Activated T-helper 1 cell treated with anti-CD3 and anti-CD28 coated beads, Interleukin-12 subunit alpha, Interleukin-12 subunit beta, Interleukin-2, Interleukin-4 antibody, amounts not matched to agents 30 ng/mL and 10 ng/mL and 1 ng/mL, durations not matched to agents 14 hours and 24 hours and 36 hours (primary cell): ENCODE measurements at regions of chr1 and their contacts with region 1.

Region 1: GRCh38 chr1:212284744-212285684 is at the start of gene PPP2R5A:
- DNase-seq: peak; percentile 99
- H3K4me3 Mint-ChIP-seq: peak within 1 kb of the TSS; percentile 97
- H3K27ac Mint-ChIP-seq: peak within 1 kb of the TSS; percentile 99
- H3K4me1 Mint-ChIP-seq: peaks cover 50% of the 10 kb centered on the region
- H3K27me3 Mint-ChIP-seq: peaks cover 3% of the 10 kb centered on the region
- total RNA-seq, gene PPP2R5A: 46.4 and 53.7 TPM in 2 replicates

Region 2: DNA sequence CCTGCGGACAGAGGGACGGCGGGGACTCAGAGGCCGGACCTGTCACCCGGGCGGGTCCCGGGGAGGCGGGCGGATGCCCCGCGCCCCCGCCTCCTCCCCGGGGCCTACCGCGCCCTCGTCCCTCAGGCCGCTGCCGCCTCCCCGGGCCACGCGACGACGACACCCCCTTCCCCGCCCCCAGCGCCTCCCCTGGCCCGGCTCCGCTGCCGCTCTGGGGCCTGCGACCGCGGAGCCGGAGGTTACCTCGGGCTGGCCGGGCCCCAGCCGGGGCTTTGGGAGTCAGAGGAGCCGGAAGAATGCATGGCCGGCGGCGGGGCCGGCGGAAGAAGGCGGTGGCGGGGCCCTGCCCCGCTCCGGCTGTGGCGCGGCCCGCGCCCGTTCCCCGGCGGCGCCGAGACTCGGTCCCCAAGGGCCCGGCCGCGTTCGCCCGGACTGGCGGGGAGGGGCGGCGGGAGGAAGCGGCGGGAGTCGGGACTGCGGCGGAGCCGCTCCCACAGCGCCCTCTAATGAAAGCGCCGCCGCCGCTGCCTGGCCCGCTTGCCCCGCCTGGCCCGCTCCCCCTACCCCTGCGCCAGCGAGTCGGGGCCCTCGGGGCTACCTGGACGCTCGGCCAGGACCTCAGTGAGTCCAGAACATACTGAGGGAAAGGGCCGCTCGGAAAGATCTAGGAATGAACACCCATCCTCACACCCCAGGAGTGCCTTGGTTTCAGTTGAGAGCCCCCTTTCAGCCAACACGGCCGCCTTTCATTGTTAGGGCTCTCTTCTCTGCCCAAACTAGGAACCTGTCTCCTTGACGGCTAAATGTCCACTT is 454.5 kb before region 1 on chr1 and contains the start of gene LPGAT1:
- intact Hi-C with region 1: loop called (anchors 5 kb)
- DNase-seq: peak; percentile 65
- H3K4me3 Mint-ChIP-seq: peak within 1 kb of the TSS; percentile 91
- H3K27ac Mint-ChIP-seq: peak within 1 kb of the TSS; percentile 90
- H3K4me1 Mint-ChIP-seq: peaks cover 69% of the 10 kb centered on the region
- H3K27me3 Mint-ChIP-seq: peaks cover 2% of the 10 kb centered on the region
- total RNA-seq, gene LPGAT1: 35.3 and 35.6 TPM in 2 replicates

Region 3: DNA sequence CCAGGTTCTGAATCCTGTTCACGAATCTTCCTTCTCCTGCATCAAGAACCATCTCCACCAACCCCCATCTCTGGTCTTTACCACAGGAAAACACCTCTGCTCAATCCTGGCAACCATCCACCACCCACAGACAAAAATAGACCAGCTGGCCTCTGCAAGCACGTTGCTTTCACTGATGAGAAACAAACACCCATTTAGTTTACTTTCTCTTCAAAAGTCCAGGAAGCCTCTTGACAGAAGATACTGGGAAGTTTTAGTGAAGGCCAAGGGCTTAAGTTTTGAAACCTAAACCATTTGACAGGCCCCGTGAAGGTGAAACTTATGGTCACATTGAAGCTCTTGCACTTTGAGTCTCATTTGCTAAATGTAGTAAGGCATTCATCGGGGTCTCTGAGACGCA is 122.4 kb before region 1 on chr1:
- intact Hi-C with region 1: loop called (anchors 2 kb)
- DNase-seq: peak; percentile 20
- H3K4me3 Mint-ChIP-seq: peak overlapping the region; percentile 41
- H3K27ac Mint-ChIP-seq: peak overlapping the region; percentile 78
- H3K4me1 Mint-ChIP-seq: peaks cover 35% of the 10 kb centered on the region
- H3K27me3 Mint-ChIP-seq: no peaks in the 10 kb centered on the region

Region 4: GRCh38 chr1:212242288-212242984 is 42.6 kb before region 1 on chr1:
- intact Hi-C with region 1: no loop called
- DNase-seq: no peak
- H3K4me3 Mint-ChIP-seq: no peak overlapping the region
- H3K27ac Mint-ChIP-seq: peak overlapping the region; percentile 71
- H3K4me1 Mint-ChIP-seq: peaks cover 33% of the 10 kb centered on the region
- H3K27me3 Mint-ChIP-seq: no peaks in the 10 kb centered on the region

Region 5: DNA sequence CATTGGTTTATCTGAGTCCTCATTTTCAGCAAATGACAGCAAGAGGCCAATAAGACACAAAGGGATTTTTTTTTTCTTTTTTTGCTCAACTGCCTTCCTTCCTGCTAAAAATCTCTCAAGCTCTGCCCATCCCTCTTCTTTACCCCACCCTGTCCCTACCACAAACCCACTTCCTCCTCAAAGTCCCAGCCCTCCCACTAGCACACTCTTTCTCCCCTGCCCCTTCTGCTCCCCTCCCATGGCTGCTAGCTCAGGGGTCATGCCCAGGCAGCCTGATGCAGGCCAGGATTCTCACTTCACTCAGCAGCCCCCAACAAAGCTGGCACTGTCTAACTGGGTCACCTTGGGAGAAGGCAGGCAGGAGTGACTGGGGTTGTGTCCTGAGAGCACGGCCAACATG is 28.6 kb before region 1 on chr1:
- intact Hi-C with region 1: loop called (anchors 1 kb)
- DNase-seq: peak; percentile 53
- H3K4me3 Mint-ChIP-seq: peak overlapping the region; percentile 27
- H3K27ac Mint-ChIP-seq: peak overlapping the region; percentile 83
- H3K4me1 Mint-ChIP-seq: peaks cover 73% of the 10 kb centered on the region
- H3K27me3 Mint-ChIP-seq: no peaks in the 10 kb centered on the region

Region 6: DNA sequence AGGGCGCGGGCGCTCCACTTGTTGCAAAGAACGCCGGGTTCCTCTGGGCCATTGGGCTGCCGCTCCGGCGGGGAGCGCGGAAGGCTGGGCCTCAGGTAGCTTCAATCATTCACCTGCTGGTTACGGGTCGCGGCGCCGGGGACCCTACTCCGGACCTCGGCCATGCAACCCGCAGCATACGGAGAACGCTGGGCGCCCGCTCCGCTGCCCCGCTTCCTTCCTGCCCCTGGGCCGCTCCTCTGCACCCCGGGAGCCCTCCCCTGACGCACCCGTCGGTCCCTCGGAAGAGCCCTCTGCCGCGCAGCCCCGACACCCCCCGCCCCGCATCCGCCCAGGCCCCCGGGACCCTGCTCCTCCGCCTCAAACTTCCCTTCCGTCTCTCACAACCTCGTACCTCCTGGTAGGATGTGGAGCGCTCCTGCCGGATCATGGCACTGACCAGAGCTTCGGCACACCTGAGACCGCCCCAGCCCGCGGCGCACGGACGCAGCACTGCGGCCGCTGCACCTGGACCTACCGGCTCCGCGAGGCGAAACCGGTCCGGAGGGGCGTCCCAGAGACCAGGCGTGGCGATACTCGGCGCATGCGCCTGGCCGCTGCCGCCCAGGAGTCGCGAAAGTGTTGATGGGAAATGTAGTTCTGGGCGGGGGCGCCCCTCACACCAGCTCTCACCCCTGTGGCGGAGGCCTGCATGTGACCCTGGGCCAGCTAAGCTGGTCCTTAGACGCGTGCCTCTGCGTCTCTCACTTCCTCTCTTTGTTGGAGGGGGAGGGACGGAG is 129.5 kb after region 1 on chr1 and contains the start of gene PACC1:
- intact Hi-C with region 1: loop called (anchors 1 kb)
- DNase-seq: peak; percentile 88
- H3K4me3 Mint-ChIP-seq: peak within 1 kb of the TSS; percentile 100
- H3K27ac Mint-ChIP-seq: peak within 1 kb of the TSS; percentile 97
- H3K4me1 Mint-ChIP-seq: peaks cover 21% of the 10 kb centered on the region
- H3K27me3 Mint-ChIP-seq: peaks cover 6% of the 10 kb centered on the region
- total RNA-seq, gene PACC1: 17.6 and 19.8 TPM in 2 replicates

Region 7: GRCh38 chr1:212608209-212608955 is 323.4 kb after region 1 on chr1 and contains the start of gene ATF3:
- intact Hi-C with region 1: loop called (anchors 10 kb)
- DNase-seq: peak; percentile 90
- H3K4me3 Mint-ChIP-seq: peak within 1 kb of the TSS; percentile 95
- H3K27ac Mint-ChIP-seq: peak within 1 kb of the TSS; percentile 97
- H3K4me1 Mint-ChIP-seq: peaks cover 63% of the 10 kb centered on the region
- H3K27me3 Mint-ChIP-seq: peaks cover 36% of the 10 kb centered on the region
- total RNA-seq, gene ATF3: 23.0 and 23.3 TPM in 2 replicates